ENCODE measurements at regions of chr5 and their contacts with region 1.

Region 1: DNA sequence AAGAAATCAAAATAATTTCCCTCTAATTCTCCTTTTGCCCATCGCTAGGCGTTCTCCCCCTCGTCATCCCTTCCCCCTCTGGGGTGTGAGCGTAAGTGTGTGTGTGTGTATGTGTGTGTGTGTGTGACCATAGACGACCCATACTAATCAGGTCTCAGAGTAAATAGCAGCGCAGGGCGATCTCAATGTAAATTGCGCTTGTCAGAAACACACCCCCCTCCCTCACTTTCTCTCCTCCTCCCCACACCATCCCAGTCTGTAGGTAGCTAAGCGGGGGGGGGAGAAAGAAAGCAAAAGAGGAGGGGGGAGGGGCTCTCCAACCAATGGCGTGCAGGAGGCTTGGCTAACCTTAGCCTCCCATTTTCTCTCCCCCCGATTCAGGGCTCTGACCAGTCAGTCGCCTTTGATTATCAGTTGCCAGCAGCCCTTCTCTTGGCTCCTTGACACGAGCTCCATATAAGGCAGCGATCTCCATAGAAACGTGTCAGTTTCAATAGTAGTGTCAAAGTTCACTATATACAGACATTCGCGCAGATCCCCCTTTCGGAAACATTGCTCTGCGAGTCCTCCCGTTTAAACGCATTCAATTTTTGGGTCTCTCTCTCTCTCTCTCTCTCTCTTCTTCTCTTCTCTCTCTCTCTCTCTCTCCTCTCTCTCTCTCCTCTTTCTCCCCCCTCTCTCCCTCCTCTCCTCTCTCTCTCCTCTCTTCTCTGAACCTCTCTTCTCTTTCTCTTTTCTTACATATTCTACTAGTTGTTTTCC is at the start of gene NR2F1:
- DNase-seq: peak; percentile 99
- ATAC-seq: peak; percentile 45
- H3K4me3 ChIP-seq: peak within 1 kb of the TSS; percentile 99
- H3K27ac ChIP-seq: peak within 1 kb of the TSS; percentile 97
- H3K4me1 ChIP-seq: no peaks in the 10 kb centered on the region
- H3K27me3 ChIP-seq: no peaks in the 10 kb centered on the region
- CTCF ChIP-seq: 0 out of 2 replicates have a peak, but pooled peaks have one; percentile 23
- POLR2A ChIP-seq: peak; percentile 69
- RAD21 ChIP-seq: no peak
- total RNA-seq, gene NR2F1: 18.1 and 19.0 TPM in 2 replicates

Region 2: DNA sequence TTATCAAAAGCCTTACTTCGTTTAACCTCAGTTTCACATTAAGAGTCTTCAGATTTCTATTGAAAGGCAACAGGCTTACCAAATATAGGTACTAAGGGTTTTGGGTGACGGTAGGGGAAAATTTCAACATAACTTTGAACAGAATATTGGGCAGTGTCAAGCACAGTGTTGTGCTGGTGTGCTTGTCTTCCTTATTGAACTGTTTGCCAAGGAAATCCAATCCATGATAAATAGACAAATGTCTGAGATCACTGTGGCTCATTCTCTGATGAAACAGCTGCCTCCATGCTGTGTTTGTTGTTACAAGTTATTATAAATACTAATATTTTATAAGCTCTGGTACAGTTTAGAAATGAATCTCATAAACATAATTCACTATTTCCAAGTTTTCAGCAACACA is 732.0 kb before region 1 on chr5:
- CTCF ChIA-PET with region 1: no interaction called
- POLR2A ChIA-PET with region 1: interaction called, 10 read pairs
- dilution Hi-C with region 1: no loop called
- in situ Hi-C with region 1: no loop called
- intact Hi-C with region 1: no loop called
- DNase-seq: peak; percentile 37
- ATAC-seq: peak; percentile 42
- H3K4me3 ChIP-seq: no peak overlapping the region
- H3K27ac ChIP-seq: no peak overlapping the region
- H3K4me1 ChIP-seq: no peaks in the 10 kb centered on the region
- H3K27me3 ChIP-seq: no peaks in the 10 kb centered on the region
- CTCF ChIP-seq: no peak
- POLR2A ChIP-seq: no peak
- RAD21 ChIP-seq: no peak

Region 3: DNA sequence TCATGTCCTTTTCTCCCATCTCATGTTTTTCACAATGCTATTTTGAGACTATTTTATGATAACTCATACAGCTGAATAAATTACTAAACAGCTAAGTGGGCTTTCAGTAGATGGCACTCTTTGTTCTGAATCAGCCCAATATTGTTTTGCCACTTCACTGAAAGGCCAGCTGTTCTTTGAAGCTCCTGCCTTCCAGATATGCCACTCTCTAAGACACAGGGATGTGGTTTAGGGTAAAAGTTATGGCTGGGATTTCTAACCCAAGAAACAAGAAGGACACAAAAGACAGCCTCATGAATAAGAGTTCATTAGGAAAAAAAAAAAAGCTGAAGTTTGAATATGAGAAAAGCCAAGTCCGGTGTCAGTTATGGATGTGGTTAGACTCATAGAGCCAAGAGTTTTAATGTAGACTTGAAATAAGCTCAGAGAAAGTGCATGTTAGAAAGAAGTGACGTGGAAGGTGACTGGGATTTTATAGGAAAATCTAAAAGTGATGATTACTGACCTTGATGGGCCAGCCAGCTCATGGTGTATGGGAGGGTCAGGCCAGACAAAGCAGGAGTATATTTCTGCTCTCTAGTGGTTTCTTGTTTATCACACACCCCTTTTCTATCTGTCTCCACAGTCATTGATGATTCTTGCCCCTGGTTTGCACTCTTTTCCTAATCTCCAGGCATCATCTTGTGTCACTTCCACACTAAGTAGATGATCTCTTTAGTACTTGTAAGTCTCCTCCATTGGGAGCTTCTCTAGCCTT is 490.3 kb before region 1 on chr5:
- CTCF ChIA-PET with region 1: interaction called, 3 read pairs
- POLR2A ChIA-PET with region 1: interaction called, 11 read pairs
- dilution Hi-C with region 1: no loop called
- in situ Hi-C with region 1: loop called (anchors 10 kb)
- intact Hi-C with region 1: loop called (anchors 2 kb)
- DNase-seq: peak; percentile 47
- ATAC-seq: peak; percentile 57
- H3K4me3 ChIP-seq: no peak overlapping the region
- H3K27ac ChIP-seq: no peak overlapping the region
- H3K4me1 ChIP-seq: peaks cover 2% of the 10 kb centered on the region; the same call in 1 of the 2 replicates
- H3K27me3 ChIP-seq: no peaks in the 10 kb centered on the region
- CTCF ChIP-seq: peak; percentile 52
- POLR2A ChIP-seq: no peak
- RAD21 ChIP-seq: peak; percentile 60

Region 4: DNA sequence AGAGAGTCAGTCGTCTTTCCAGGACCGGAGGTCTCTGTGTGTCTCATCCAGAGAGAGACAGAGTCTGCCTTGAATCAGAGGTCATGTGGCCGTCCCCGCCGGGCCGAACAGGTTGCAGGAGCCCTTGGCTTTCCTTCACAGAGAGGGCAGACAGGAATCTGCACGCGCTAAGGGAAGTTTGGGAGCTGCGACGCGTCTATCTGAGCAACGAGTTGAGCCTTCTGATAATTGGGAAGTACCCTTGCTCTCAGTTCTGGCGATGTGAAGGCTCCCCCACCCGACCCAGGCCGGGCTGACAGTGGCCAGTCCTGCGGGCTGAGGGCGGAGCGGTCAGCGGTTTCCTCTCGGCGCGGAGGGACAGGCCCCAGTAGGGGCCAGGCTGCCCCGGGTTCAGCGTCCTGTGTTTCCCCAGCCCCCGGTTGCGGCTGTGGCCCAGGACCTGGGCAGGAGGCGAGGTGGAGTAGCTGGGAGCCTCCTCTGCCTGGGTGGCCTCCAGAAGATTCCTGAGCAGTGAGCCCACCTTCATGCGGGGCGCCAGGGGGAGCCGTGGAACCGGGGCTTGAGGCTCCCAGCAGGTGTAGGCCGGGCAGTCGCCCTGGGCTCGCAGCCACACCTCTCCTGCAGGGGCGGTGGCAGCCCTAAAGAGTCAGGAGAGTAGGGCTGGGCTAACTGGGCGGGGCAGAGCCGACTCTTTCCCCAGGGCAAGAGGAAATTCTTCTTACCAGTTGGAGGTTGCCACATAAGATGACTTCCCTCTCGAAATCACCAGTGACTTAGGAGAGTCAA is 14.0 kb after region 1 on chr5:
- CTCF ChIA-PET with region 1: no interaction called
- POLR2A ChIA-PET with region 1: interaction called, 12 read pairs
- dilution Hi-C with region 1: no loop called
- in situ Hi-C with region 1: no loop called
- intact Hi-C with region 1: no loop called
- DNase-seq: no peak
- ATAC-seq: no peak
- H3K4me3 ChIP-seq: no peak overlapping the region
- H3K27ac ChIP-seq: no peak overlapping the region
- H3K4me1 ChIP-seq: peaks cover 26% of the 10 kb centered on the region
- H3K27me3 ChIP-seq: no peaks in the 10 kb centered on the region
- CTCF ChIP-seq: no peak
- POLR2A ChIP-seq: no peak
- RAD21 ChIP-seq: no peak

Region 5: GRCh38 chr5:93915142-93915553 is 332.3 kb after region 1 on chr5:
- CTCF ChIA-PET with region 1: no interaction called
- POLR2A ChIA-PET with region 1: no interaction called
- dilution Hi-C with region 1: no loop called
- in situ Hi-C with region 1: loop called (anchors 10 kb)
- intact Hi-C with region 1: loop called (anchors 2 kb)
- DNase-seq: peak; percentile 73
- ATAC-seq: peak; percentile 56; the same call in 1 of the 2 replicates
- H3K4me3 ChIP-seq: no peak overlapping the region
- H3K27ac ChIP-seq: no peak overlapping the region
- H3K4me1 ChIP-seq: no peaks in the 10 kb centered on the region
- H3K27me3 ChIP-seq: no peaks in the 10 kb centered on the region
- CTCF ChIP-seq: peak; percentile 69
- POLR2A ChIP-seq: no peak
- RAD21 ChIP-seq: peak; percentile 75

Region 6: DNA sequence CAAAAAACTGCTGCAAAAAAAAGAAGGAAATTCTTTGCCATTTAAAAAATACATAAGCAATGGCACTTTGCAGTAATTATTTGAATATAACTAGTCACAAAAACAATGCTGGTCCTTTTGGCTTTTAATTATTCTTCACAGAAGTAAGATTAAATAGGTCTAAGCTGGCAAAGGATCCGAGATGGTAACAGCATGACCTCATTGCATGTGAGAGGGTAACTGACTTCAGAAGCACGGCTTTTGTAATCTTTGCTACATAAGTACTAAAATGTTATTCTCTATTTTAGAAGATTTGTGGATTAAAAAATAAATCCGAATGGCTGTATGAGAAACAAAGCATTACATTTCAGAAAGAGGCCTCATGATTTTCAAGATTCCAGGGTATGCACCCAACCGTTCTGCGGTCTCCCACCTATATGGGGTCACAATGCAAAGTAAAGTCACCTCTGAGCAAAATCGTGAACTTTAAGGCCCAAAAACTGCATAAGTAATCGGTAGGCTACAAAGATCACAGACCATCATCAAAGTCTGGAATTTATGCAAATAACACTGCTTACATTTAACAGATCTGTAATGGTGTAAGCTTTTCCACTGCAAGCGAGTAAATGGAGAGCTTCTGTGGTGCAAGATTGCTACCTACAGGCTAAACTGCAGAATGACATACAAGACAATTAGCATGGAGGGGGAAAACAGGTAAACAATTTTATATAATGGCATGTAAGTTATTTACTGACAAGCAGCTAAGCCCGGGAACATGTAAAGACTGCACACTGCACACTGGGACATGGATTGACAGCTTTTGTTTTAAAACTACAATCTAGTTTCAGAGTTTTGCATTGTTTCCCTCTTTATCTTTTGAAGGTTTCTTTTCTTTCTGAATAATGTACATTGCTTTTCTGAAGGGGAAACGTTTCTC is 1267.2 kb after region 1 on chr5:
- CTCF ChIA-PET with region 1: no interaction called
- POLR2A ChIA-PET with region 1: no interaction called
- dilution Hi-C with region 1: no loop called
- in situ Hi-C with region 1: no loop called
- intact Hi-C with region 1: loop called (anchors 5 kb)
- DNase-seq: peak; percentile 66
- ATAC-seq: peak; percentile 96
- H3K4me3 ChIP-seq: no peak overlapping the region
- H3K27ac ChIP-seq: no peak overlapping the region
- H3K4me1 ChIP-seq: no peaks in the 10 kb centered on the region
- H3K27me3 ChIP-seq: no peaks in the 10 kb centered on the region
- CTCF ChIP-seq: peak; percentile 82
- POLR2A ChIP-seq: no peak
- RAD21 ChIP-seq: peak; percentile 86

Measured in IMR-90 (cell line).